PC-3 (cell line): ENCODE measurements at regions of chr5 and their contacts with region 1.

Region 1: DNA sequence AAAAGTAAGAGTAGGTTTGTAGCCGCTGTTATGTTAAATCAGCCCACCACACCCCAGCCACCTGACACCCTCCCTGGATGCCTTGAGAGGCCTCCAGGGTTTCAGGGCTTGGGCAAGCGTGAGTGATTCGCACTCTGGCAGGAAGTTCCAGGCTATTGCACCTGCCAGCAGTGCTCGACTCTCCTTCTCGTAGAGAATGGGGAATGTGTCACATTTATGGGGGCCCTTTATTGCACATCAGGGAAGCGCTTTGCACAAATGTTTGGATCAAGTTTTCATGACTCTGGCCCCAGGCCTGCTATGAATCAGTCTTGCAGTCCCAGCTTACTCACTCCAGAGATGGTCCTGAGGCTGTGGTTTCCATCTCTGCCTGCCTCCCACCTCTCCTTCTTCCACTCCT is 66.1 kb upstream of the ADRA1B start:
- DNase-seq: peak; percentile 97
- ATAC-seq: peak; percentile 80
- H3K4me3 ChIP-seq: peak overlapping the region; percentile 46; the same call in 1 of the 2 replicates
- H3K27ac ChIP-seq: peak overlapping the region; percentile 96
- H3K4me1 ChIP-seq: peaks cover 26% of the 10 kb centered on the region
- H3K27me3 ChIP-seq: no peaks in the 10 kb centered on the region
- CTCF ChIP-seq: no peak

Region 2: GRCh38 chr5:159735749-159736660 is 114.2 kb before region 1 on chr5:
- CTCF ChIA-PET with region 1: no interaction called
- POLR2A ChIA-PET with region 1: no interaction called
- intact Hi-C with region 1: loop called (anchors 2 kb)
- DNase-seq: peak; percentile 81
- ATAC-seq: peak; percentile 89
- H3K4me3 ChIP-seq: peak overlapping the region; percentile 34; the same call in 1 of the 2 replicates
- H3K27ac ChIP-seq: peak overlapping the region; percentile 62
- H3K4me1 ChIP-seq: peaks cover 23% of the 10 kb centered on the region
- H3K27me3 ChIP-seq: no peaks in the 10 kb centered on the region
- CTCF ChIP-seq: no peak

Region 3: GRCh38 chr5:159899067-159900049 is 49.2 kb after region 1 on chr5:
- CTCF ChIA-PET with region 1: no interaction called
- POLR2A ChIA-PET with region 1: no interaction called
- intact Hi-C with region 1: loop called (anchors 2 kb)
- DNase-seq: peak; percentile 87
- ATAC-seq: peak; percentile 64
- H3K4me3 ChIP-seq: no peak overlapping the region
- H3K27ac ChIP-seq: peak overlapping the region; percentile 29; the same call in 1 of the 2 replicates
- H3K4me1 ChIP-seq: peaks cover 55% of the 10 kb centered on the region
- H3K27me3 ChIP-seq: no peaks in the 10 kb centered on the region
- CTCF ChIP-seq: no peak